Heart left ventricle (tissue), 16 donors: ENCODE measurements at regions of chr13 and their contacts with region 1.

Region 1: DNA sequence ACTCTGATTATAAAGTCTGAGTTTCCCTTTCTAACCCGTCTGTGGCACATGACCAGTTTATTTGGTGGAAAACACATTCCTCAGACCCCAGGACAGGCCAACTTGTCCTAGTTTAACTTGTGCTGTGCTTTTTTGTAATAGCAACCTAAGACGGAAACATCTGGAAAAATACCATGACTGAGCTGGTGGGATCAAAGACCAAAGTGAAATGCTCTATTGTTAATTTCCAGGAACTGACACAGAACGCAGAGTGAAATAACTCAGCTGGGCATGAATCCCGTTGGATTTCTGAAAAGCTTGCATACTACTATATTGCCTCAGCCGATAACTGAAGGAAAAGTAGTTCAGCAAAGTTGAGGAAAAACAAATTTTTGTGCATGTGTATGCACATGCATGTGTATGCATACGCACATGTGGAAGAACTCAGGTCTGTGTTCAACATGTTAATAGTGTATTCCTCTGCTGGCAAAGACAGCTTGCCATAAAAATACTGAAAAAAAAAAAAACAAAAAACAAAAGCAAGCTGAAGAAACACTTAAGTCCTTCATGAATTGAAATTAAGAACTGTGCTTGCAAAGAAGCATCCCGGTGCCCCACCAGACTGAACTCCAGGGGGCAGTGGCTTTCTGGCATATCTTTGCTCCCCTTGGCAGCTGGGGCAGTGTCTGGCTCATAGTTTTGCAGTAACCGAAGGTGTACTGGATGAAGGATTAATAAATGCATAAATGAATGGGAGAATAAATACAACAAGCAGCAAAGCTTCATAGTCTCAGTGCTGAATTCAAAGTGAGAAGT is 187.8 kb downstream of the LHFPL6 start:
- DNase-seq: peak; percentile 65 to 75 (median 68)
- ATAC-seq: peak; percentile 65 to 87 (median 78)
- H3K4me3 ChIP-seq: peak overlapping the region in 7 of 12 donors; percentile 3 to 16 (median 10)
- H3K27ac ChIP-seq: peak overlapping the region; percentile 52 to 83 (median 70)
- H3K4me1 ChIP-seq: peaks cover 0 to 88% (median 71%) of the 10 kb centered on the region in 12 donors
- H3K27me3 ChIP-seq: no peaks in the 10 kb centered on the region
- CTCF ChIP-seq: peak; percentile 35 to 75 (median 64)
- POLR2A ChIP-seq: no peak

Region 2: DNA sequence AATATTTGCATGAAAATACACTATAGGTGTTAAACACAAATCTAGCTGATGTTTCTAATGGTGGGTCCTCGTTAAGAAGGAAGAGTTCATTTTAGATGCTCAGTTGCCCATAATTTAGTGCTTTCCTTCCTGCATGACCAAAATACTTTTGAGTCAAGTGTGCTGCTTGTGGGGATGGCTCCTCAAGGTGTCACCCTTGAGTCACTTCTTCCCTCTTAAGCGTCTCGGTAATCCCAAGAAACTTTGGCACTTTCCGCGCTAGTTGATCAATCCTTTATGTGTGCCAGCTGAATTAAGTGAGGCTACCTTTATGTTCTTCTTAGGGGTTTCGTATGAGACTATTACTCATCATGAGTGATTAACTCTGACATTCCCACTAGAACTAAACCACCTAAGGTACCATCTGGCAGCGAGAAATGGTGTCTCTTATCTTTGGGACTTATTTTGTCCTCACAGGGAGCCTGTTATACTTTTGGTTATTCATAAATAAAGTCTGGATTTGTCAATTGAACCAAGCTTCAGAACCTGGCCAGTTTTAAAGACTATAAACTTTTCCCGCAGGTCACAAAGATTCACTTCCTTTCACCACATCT is 270.2 kb before region 1 on chr13:
- intact Hi-C with region 1: loop called in 5 of 10 experiments (anchors 5 to 10 kb)
- DNase-seq: peak in 4 of 5 donors; percentile 47 to 65 (median 62)
- ATAC-seq: peak; percentile 57 to 77 (median 74)
- H3K4me3 ChIP-seq: peak overlapping the region in 7 of 12 donors; percentile 13 to 52 (median 21)
- H3K27ac ChIP-seq: peak overlapping the region in 6 of 12 donors; percentile 1 to 47 (median 23)
- H3K4me1 ChIP-seq: peaks cover 0 to 20% (median 0%) of the 10 kb centered on the region in 12 donors
- H3K27me3 ChIP-seq: no peaks in the 10 kb centered on the region
- CTCF ChIP-seq: peak; percentile 62 to 91 (median 84)
- POLR2A ChIP-seq: no peak

Region 3: DNA sequence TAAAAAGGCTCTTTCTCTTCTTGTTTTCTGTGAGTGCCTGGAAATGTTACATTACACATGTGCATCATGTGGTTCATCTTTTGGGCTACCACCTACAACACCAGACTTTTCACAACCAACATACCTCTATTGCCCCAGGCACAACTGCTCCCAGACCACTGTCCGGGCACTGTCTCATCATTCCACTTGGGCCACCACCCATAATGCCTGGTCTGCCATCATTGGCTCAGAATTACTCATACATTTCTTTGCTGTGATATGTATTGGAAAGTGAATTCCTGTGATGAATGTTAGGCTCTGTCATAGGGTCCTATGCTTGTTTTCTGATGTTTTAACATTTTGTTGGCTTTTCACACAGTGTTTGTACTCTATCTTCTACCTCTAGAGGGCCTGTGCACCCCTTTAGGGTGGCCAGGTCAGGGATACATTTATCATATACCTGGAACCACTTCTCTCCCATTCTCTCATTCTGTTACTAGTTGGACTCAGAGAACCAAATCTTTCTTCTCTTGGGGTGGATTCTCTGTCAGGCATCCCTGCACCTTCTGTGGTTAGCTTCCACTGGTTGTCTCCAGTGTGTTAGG is 204.2 kb before region 1 on chr13:
- intact Hi-C with region 1: no loop called
- DNase-seq: no peak
- ATAC-seq: no peak
- H3K4me3 ChIP-seq: no peak overlapping the region
- H3K27ac ChIP-seq: peak overlapping the region in 2 of 12 donors; percentile 17 to 19
- H3K4me1 ChIP-seq: peaks cover 0 to 13% (median 4%) of the 10 kb centered on the region in 12 donors
- H3K27me3 ChIP-seq: no peaks in the 10 kb centered on the region
- CTCF ChIP-seq: no peak
- POLR2A ChIP-seq: no peak

Region 4: DNA sequence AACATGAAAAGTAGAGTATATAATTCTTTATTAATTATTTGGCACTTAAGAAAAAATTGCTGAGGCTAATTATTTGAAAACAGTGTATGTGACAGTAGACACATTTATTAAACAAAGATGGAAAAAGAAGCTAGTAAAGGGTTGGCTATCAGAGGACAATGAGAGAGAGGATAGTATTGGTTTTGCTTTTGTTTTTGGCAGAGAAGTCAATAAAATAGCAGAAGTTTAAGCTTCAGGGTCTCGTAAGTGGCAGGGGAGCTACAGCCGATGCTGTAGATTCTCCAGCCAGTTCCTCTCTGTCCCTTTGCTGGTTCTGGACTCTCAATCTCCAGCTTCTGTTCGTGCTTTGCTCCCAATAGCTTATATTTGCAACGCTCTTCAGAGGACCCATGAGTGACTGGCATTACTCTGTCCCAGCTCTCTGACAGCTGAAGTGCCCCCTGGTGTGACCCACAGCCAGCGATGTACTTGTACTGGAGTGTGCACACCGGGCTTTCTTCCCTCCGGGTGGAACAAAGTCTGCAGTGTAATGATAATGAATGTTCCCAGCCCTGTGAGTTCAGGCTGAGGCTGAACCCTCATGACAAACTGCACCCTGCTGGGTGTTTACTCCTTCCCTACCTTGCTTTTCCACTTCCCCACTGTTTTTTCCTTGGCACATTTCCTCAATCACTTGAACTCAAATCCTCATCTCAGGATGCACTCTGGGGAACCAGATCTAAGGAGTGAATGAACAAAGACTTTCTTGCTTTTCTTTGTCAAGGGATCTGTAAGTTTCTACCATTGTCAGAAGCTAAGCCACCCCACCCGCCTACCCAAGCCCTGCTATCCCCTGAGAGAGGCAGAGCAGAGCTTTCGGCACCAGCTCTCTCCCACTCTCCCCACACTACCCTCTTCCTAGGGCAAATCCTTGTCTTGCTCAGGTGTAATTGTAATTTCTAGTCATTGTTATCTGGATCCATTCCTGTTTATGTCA is 67.0 kb before region 1 on chr13:
- intact Hi-C with region 1: no loop called
- DNase-seq: peak; percentile 57 to 86 (median 71)
- ATAC-seq: peak; percentile 93 to 97 (median 94)
- H3K4me3 ChIP-seq: peak overlapping the region in 3 of 12 donors; percentile 9 to 36 (median 25)
- H3K27ac ChIP-seq: peak overlapping the region in 11 of 12 donors; percentile 4 to 83 (median 63)
- H3K4me1 ChIP-seq: peaks cover 0 to 63% (median 41%) of the 10 kb centered on the region in 12 donors
- H3K27me3 ChIP-seq: no peaks in the 10 kb centered on the region
- CTCF ChIP-seq: peak in 2 of 12 donors; percentile 9 to 24
- POLR2A ChIP-seq: no peak

Region 5: DNA sequence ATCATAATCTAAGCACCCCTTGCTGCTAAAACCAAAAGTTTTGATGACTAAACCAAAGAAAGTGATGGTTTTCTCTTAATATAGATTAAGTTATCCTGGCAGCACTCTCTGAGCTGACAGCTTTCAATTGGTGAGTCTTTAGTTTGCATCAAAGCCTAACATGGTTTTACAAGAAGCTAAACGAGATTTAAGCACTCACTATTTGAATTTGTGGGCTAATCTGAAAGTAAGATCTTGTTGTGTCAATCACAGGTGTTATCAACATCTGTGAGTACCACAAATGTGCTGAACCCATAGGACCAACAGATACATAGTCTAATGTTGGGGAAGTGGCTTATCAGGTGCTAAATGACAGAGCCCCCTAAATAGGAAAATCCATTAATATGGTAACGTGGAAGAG is 36.1 kb before region 1 on chr13:
- intact Hi-C with region 1: no loop called
- DNase-seq: no peak
- ATAC-seq: no peak
- H3K4me3 ChIP-seq: no peak overlapping the region
- H3K27ac ChIP-seq: no peak overlapping the region
- H3K4me1 ChIP-seq: peaks cover 0 to 36% (median 17%) of the 10 kb centered on the region in 12 donors
- H3K27me3 ChIP-seq: no peaks in the 10 kb centered on the region
- CTCF ChIP-seq: no peak
- POLR2A ChIP-seq: no peak

Region 6: DNA sequence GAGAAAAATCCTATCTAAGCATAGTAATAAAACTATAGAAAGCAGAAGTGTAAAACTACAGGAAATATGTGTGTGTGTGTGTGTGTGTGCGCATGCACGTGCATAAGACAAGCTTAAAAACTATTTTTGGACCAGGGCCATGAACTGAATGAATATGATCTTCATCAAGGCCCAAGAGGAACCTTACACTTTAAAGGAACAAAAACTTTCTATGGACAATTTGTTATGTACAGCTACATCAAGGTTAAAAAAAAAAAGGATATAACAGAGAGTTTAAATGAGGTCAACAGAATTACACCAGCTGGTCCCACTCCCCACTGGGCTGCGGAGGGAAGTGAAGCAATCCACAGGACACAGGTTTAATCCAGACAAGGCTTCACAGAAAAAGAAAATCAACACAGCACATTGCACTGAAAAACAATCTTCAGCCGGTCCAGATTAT is 36.7 kb after region 1 on chr13:
- intact Hi-C with region 1: loop called in 5 of 10 experiments (anchors 2 to 5 kb)
- DNase-seq: peak; percentile 49 to 71 (median 63)
- ATAC-seq: peak; percentile 59 to 83 (median 78)
- H3K4me3 ChIP-seq: no peak overlapping the region
- H3K27ac ChIP-seq: peak overlapping the region; percentile 66 to 84 (median 78)
- H3K4me1 ChIP-seq: peaks cover 17 to 90% (median 76%) of the 10 kb centered on the region in 12 donors
- H3K27me3 ChIP-seq: no peaks in the 10 kb centered on the region
- CTCF ChIP-seq: no peak
- POLR2A ChIP-seq: no peak

Region 7: DNA sequence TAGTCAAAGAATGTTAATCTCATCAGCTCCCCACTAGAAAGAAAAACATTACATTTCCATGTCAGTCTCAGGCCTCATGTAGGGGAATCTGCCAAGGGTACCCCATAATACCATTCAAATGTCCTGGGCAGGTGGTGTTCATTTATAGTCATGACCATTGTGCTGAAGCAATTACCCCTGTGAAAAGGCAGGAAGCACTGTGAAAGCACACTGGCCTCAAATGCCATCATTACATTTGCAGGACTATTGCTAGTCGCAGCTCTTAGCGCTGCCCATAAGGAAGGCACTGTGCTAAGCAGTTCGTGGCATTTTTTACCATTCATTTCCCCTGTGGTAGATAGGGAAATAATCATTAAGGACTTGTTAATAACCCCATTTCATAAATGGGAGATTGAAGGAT is 78.8 kb after region 1 on chr13:
- intact Hi-C with region 1: loop called in 3 of 10 experiments (anchors 5 to 10 kb)
- DNase-seq: no peak
- ATAC-seq: peak in 1 of 4 donors; percentile 16
- H3K4me3 ChIP-seq: no peak overlapping the region
- H3K27ac ChIP-seq: no peak overlapping the region
- H3K4me1 ChIP-seq: peaks cover 0 to 85% (median 48%) of the 10 kb centered on the region in 12 donors
- H3K27me3 ChIP-seq: no peaks in the 10 kb centered on the region
- CTCF ChIP-seq: no peak
- POLR2A ChIP-seq: no peak